Ascending aorta (tissue), 2 donors: ENCODE measurements at regions of chr7 and their contacts with region 1.

Region 1: GRCh38 chr7:1044191-1045068 is at the start of gene GPR146:
- DNase-seq: peak; percentile 92 to 99
- H3K4me3 ChIP-seq: peak within 1 kb of the TSS; percentile 74 to 77
- H3K27ac ChIP-seq: peak within 1 kb of the TSS; percentile 80 to 94
- H3K4me1 ChIP-seq: peaks cover 3 to 22% of the 10 kb centered on the region in 2 donors
- H3K27me3 ChIP-seq: no peaks in the 10 kb centered on the region
- CTCF ChIP-seq: peak; percentile 61 to 78 (median 72)
- total RNA-seq, gene GPR146: 224 TPM

Region 2: GRCh38 chr7:610531-611275 is 433.7 kb before region 1 on chr7:
- intact Hi-C with region 1: no loop called
- DNase-seq: no peak
- H3K4me3 ChIP-seq: no peak overlapping the region
- H3K27ac ChIP-seq: peak overlapping the region; percentile 40 to 77
- H3K4me1 ChIP-seq: peaks cover 0 to 21% of the 10 kb centered on the region in 2 donors
- H3K27me3 ChIP-seq: no peaks in the 10 kb centered on the region
- CTCF ChIP-seq: no peak

Region 3: DNA sequence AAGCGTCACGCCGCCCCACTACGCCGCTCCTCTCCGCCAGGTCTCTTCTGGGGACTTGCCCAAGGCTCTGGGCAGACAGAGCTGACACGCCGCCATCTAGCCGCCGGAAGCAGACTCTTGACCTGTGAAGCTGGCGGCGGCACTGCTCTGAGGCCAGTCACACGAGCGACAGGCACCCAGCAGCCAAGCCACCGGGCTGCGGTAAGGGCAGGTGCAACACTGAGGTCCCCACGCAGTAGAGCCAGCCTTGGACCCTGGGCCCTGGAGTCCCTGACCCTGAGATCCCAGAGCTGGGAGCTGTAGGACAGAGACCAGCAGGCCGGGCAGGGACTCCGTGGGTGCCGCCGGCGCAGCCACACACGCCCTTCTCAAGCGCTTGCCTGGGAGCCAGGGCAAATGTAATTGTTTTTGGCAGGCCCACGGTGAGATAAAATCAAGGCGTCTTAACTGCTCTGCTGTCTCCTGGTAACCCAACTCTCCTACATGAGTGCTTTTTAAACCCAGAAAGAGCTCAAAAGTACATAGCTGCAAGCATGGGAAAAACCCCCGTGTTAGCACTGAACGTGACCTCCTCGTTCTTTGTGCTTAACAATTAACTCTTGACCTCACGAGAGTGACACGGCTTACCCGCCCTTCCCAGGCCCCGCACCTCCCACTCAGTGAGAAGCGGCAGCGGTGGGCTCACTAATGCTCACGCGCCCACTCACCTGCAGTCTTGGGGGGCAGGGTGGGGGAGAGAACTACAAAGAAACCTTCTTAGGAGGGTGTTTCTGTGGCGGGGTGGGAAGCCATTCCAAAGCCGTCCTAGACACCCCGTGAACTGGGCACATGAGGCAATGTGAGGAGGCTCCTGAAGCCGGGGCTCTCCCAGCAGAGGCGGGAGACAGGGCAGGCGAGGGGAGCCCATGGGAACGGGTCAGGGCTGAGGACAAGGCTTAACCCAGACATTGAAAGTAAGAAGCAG is 52.0 kb after region 1 on chr7:
- intact Hi-C with region 1: loop called (anchors 5 kb)
- DNase-seq: no peak
- H3K4me3 ChIP-seq: peak overlapping the region; percentile 36 to 59
- H3K27ac ChIP-seq: peak overlapping the region; percentile 67 to 69
- H3K4me1 ChIP-seq: peaks cover 5 to 18% of the 10 kb centered on the region in 2 donors
- H3K27me3 ChIP-seq: no peaks in the 10 kb centered on the region
- CTCF ChIP-seq: peak in 1 of 3 experiments; percentile 8

Region 4: GRCh38 chr7:1159891-1160668 is 115.7 kb after region 1 on chr7 and contains the start of gene ZFAND2A:
- intact Hi-C with region 1: loop called (anchors 1 kb)
- DNase-seq: peak; percentile 96 to 99
- H3K4me3 ChIP-seq: peak within 1 kb of the TSS; percentile 88 to 96
- H3K27ac ChIP-seq: peak within 1 kb of the TSS; percentile 87 to 96
- H3K4me1 ChIP-seq: peaks cover 0 to 15% of the 10 kb centered on the region in 2 donors
- H3K27me3 ChIP-seq: no peaks in the 10 kb centered on the region
- CTCF ChIP-seq: no peak
- total RNA-seq, gene ZFAND2A: 5.6 TPM

Region 5: DNA sequence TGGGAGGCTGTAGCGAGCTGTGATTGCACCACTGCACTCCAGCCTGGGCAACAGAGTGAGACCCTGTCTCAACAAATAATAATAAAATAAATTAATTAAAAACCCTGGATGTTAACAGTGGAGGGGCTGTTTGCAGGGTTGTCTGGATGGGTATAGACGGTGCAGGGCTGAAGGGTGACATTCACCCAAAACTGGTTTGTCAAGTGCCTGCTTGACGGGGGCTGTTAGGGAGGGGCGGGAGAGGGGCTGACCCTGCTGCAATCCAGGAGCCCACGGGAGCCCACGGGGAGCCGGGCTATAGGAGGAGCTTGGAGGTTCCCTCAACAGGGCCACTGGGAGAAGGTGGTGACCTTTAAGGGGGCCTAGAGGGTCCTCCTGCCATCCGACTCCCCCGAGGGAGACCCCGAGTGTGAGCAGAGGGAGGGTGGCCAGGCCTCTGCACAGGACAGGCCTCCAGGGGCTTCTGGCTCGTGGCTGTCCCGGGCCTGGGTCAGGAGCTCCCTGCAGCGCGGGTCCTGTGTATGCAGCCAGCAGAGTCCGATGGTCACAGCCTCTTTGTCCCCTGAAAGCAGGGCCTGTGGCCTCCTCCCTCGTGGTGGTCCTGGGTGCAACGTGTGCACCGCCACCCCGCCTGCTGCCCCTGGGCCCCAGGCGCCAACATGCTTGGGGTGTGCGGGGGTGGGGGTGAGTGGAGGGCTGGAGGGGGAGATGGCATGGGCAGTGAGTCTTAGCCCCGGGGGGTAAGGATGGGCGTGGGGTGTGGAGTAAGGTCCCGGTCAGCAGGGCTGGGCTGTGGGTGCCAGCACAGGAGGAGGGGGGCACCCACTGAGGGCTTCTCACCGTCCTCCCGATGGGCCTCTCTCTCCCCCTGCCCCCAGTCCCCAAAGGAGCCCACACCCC is 215.2 kb after region 1 on chr7:
- intact Hi-C with region 1: no loop called
- DNase-seq: no peak
- H3K4me3 ChIP-seq: no peak overlapping the region
- H3K27ac ChIP-seq: no peak overlapping the region
- H3K4me1 ChIP-seq: no peaks in the 10 kb centered on the region
- H3K27me3 ChIP-seq: no peaks in the 10 kb centered on the region
- CTCF ChIP-seq: no peak